ENCODE measurements at regions of chr12 and their contacts with region 1.

Region 1: DNA sequence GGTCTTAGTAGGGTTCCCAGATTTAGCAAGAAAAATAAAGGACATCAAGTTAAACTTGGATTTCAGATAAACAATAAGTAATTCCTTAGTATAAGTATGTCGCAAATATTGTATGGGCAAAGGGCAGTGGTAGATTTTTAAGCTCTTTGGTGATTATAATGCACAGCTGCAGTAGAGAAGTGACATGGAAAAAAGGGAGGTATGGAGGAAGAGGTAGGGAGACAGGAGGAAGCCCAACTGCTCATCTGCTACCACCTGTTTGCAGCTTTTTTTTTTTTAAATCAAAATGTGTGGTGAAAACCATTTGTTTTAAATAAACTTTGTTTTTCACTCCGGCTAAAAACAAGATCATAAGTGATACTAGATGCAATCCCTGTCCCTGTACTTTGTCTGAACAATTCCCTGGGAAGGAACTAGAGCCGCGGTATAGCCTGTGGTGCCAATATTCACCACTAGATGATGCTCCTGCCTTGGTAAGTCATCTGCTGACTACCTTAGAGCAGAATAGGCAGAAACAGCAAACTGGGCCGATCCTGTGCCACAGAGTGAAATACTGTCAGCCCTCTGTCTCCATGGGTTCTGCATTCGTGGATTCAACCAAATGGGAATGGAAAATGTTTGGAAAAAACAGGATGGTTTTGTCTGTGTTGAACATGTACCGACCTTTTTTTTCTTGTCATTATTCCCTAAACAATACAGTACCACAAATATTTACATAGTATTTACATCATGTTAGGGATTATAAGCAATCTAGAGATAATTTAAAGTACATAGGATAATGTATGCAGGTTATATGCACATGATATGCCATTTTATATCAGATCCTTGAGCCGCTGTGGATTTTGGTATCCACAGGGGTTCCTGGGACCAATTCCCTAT is 62.4 kb upstream of the PLBD1 start:
- DNase-seq: peak; percentile 56
- H3K4me3 ChIP-seq: no peak overlapping the region
- H3K27ac ChIP-seq: no peak overlapping the region
- H3K4me1 ChIP-seq: no peaks in the 10 kb centered on the region
- H3K27me3 ChIP-seq: no peaks in the 10 kb centered on the region
- CTCF ChIP-seq: peak; percentile 99 to 100

Region 2: DNA sequence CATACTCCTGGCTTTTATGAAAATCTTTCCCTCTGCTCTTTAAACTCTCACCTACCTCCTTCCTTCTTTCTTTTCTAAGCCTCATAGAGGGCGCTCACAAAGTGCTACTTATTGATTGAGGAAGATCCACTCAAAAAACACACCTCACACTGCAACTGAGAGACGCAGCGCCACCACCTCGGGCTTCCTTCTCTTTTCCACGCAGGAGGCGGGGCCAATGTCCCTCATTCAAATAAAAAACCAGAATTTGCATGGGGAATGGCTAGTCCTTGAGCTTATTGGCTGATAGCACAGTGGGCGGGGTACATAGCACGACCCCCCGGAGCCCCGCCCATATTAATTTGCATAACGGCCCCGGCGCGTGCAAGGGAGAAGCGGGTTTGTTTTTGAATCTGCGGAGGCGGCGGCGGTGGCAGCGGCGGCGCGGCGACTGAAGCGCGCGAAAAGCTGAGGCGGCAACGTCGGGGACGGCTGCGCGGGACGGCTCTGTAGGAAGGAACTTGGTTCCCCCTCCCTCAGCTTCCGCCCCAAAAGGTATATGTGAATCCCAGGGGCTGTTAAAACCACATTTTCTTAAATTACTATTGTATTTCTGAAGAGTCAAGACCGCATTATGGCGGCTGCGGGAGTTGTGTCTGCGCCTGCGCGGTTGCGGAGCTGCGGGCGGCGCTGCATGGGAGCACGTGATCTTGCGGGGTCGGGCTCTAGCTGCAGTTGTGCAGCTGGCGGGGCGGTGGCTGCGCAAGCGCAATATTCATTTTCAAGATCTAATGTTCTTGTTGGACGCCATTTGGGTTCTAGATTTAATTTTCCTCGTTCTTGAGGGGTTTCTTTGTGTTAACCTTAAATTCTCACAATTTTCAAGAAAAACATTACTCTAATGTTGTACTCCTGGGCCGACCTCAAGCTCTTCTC is 264.5 kb before region 1 on chr12 and contains the start of gene ATF7IP:
- CTCF ChIA-PET with region 1: no interaction called
- dilution Hi-C with region 1: no loop called
- in situ Hi-C with region 1: no loop called
- intact Hi-C with region 1: no loop called
- DNase-seq: peak; percentile 95
- H3K4me3 ChIP-seq: peak within 1 kb of the TSS; percentile 76 to 100 (median 78)
- H3K27ac ChIP-seq: peak within 1 kb of the TSS; percentile 95
- H3K4me1 ChIP-seq: no peaks in the 10 kb centered on the region
- H3K27me3 ChIP-seq: no peaks in the 10 kb centered on the region
- CTCF ChIP-seq: peak; percentile 7 to 36
- total RNA-seq, gene ATF7IP: 33.3 to 41.0 TPM

Region 3: GRCh38 chr12:14514946-14515345 is 115.1 kb before region 1 on chr12:
- CTCF ChIA-PET with region 1: no interaction called
- dilution Hi-C with region 1: no loop called
- in situ Hi-C with region 1: no loop called
- intact Hi-C with region 1: no loop called
- DNase-seq: peak; percentile 80
- H3K4me3 ChIP-seq: no peak overlapping the region
- H3K27ac ChIP-seq: peak overlapping the region; percentile 75
- H3K4me1 ChIP-seq: peaks cover 16% of the 10 kb centered on the region
- H3K27me3 ChIP-seq: no peaks in the 10 kb centered on the region
- CTCF ChIP-seq: no peak

Region 4: GRCh38 chr12:14664510-14664909 is 34.4 kb after region 1 on chr12:
- CTCF ChIA-PET with region 1: no interaction called
- dilution Hi-C with region 1: no loop called
- in situ Hi-C with region 1: no loop called
- intact Hi-C with region 1: loop called (anchors 1 kb)
- DNase-seq: peak; percentile 23
- H3K4me3 ChIP-seq: no peak overlapping the region
- H3K27ac ChIP-seq: no peak overlapping the region
- H3K4me1 ChIP-seq: no peaks in the 10 kb centered on the region
- H3K27me3 ChIP-seq: peaks cover 1% of the 10 kb centered on the region
- CTCF ChIP-seq: peak; percentile 54 to 68

Region 5: GRCh38 chr12:14716848-14717444 is 86.9 kb after region 1 on chr12:
- CTCF ChIA-PET with region 1: no interaction called
- dilution Hi-C with region 1: no loop called
- in situ Hi-C with region 1: loop called in 1 of 2 experiments (anchors 5 kb)
- intact Hi-C with region 1: loop called (anchors 1 kb)
- DNase-seq: peak; percentile 42
- H3K4me3 ChIP-seq: no peak overlapping the region
- H3K27ac ChIP-seq: no peak overlapping the region
- H3K4me1 ChIP-seq: no peaks in the 10 kb centered on the region
- H3K27me3 ChIP-seq: no peaks in the 10 kb centered on the region
- CTCF ChIP-seq: peak; percentile 34 to 59